Esophagus muscularis mucosa (tissue), 4 donors: ENCODE measurements at regions of chr10 and their contacts with region 1.

Region 1: DNA sequence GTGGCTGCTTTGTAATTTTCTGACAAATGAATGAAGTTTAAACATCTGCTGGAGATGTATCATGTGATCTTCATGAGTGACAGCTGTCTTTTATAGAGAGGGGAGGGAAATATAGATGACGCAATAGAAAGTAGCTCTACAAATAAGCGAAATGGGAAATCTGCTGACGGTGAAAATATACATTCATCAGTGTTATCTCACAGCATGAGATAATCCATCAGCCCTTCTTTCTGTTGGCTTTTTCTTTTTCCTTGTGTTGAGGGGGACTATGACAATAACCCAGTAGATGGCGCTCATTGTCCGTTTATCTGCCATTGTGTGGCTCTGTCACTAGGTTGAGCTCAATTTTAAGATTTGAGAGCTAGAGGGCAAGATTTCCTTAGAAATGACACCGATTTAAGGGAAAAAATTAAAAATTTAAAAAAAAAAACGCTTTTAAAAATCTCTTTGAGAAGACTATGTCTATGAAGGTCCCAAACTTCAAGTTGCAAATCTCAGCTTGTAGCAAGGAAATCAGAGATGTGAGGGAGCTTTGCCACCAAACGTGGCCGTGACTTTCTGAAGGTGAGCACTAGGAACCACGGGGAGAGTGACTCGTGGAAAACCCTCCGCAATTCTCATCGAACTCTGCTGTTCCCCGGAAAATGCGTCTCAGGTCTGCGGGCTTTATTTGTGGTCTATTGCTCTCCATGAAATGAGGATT is 114.6 kb upstream of the SFMBT2 start:
- DNase-seq: no peak
- H3K4me3 ChIP-seq: no peak overlapping the region
- H3K27ac ChIP-seq: no peak overlapping the region
- H3K4me1 ChIP-seq: peaks cover 0 to 7% (median 3%) of the 10 kb centered on the region in 4 donors
- H3K27me3 ChIP-seq: peaks cover 0 to 18% (median 0%) of the 10 kb centered on the region in 4 donors
- CTCF ChIP-seq: peak; percentile 80 to 90 (median 90)
- EP300 ChIP-seq: no peak
- POLR2A ChIP-seq: no peak

Region 2: DNA sequence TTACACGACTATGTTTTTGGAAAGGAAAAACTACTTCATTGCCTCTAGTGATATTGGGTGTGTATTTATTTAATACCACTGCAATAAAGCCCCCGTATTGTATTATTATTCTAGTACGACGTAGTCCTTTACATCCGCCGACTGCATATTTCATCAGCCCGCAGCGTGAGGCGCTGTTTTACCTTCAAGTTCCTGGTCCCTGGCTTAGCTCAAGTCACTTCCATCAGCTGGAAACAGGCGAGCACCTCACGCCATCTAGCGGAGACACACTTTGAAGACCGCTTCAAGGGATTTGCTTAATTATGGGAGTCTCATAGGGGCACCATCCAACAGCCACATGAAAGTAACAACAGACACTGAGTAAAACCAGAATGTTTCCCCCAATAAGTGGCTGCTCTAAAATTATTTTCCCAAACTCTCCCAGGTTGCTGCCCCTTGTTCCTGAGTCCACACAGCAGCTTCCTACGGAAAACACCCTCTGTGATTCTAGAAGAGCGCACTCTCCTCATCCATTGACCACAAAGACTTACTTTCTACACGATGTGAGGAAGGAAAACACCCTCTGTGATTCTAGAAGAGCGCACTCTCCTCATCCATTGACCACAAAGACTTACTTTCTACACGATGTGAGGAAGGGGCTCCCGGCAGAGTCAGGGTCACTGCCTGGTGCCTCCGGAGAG is 161.9 kb after region 1 on chr10:
- intact Hi-C with region 1: loop called (anchors 1 kb)
- DNase-seq: peak; percentile 95
- H3K4me3 ChIP-seq: no peak overlapping the region
- H3K27ac ChIP-seq: no peak overlapping the region
- H3K4me1 ChIP-seq: peaks cover 0 to 3% (median 0%) of the 10 kb centered on the region in 4 donors
- H3K27me3 ChIP-seq: no peaks in the 10 kb centered on the region
- CTCF ChIP-seq: peak; percentile 90 to 98 (median 92)
- EP300 ChIP-seq: no peak
- POLR2A ChIP-seq: no peak

Region 3: GRCh38 chr10:8306685-8307364 is 781.4 kb after region 1 on chr10:
- intact Hi-C with region 1: no loop called
- DNase-seq: no peak
- H3K4me3 ChIP-seq: no peak overlapping the region
- H3K27ac ChIP-seq: no peak overlapping the region
- H3K4me1 ChIP-seq: no peaks in the 10 kb centered on the region
- H3K27me3 ChIP-seq: peaks cover 0 to 18% (median under 1%) of the 10 kb centered on the region in 4 donors
- CTCF ChIP-seq: no peak
- EP300 ChIP-seq: no peak
- POLR2A ChIP-seq: no peak